ENCODE measurements at regions of chr9 and their contacts with region 1.

Region 1: GRCh38 chr9:14532716-14533115 is 160.5 kb downstream of the ZDHHC21 start:
- DNase-seq: no peak
- ATAC-seq: no peak
- H3K4me3 ChIP-seq: no peak overlapping the region
- H3K4me3 Mint-ChIP-seq: no peak overlapping the region
- H3K27ac ChIP-seq: no peak overlapping the region
- H3K27ac Mint-ChIP-seq: no peak overlapping the region
- H3K4me1 ChIP-seq: no peaks in the 10 kb centered on the region
- H3K4me1 Mint-ChIP-seq: no peaks in the 10 kb centered on the region
- H3K27me3 ChIP-seq: no peaks in the 10 kb centered on the region
- H3K27me3 Mint-ChIP-seq: peaks cover 14% of the 10 kb centered on the region
- CTCF ChIP-seq: no peak

Region 2: GRCh38 chr9:14504886-14505285 is 27.8 kb before region 1 on chr9:
- CTCF ChIA-PET with region 1: no interaction called
- POLR2A ChIA-PET with region 1: no interaction called
- intact Hi-C with region 1: loop called in 1 of 2 experiments (anchors 1 kb)
- DNase-seq: no peak
- ATAC-seq: no peak
- H3K4me3 ChIP-seq: no peak overlapping the region
- H3K4me3 Mint-ChIP-seq: no peak overlapping the region
- H3K27ac ChIP-seq: no peak overlapping the region
- H3K27ac Mint-ChIP-seq: no peak overlapping the region
- H3K4me1 ChIP-seq: no peaks in the 10 kb centered on the region
- H3K4me1 Mint-ChIP-seq: no peaks in the 10 kb centered on the region
- H3K27me3 ChIP-seq: no peaks in the 10 kb centered on the region
- H3K27me3 Mint-ChIP-seq: peaks cover 4% of the 10 kb centered on the region
- CTCF ChIP-seq: no peak